Caco-2 (cell line): ENCODE measurements at regions of chr2 and their contacts with region 1.

Region 1: GRCh38 chr2:186544255-186544675 is 45.6 kb upstream of the ITGAV start:
- DNase-seq: no peak
- H3K4me3 ChIP-seq: no peak overlapping the region
- H3K4me3 Mint-ChIP-seq: peak overlapping the region; percentile 3
- H3K27ac Mint-ChIP-seq: no peak overlapping the region
- H3K4me1 ChIP-seq: peaks cover 45% of the 10 kb centered on the region
- H3K4me1 Mint-ChIP-seq: peaks cover 11% of the 10 kb centered on the region
- H3K27me3 ChIP-seq: no peaks in the 10 kb centered on the region
- H3K27me3 Mint-ChIP-seq: no peaks in the 10 kb centered on the region
- CTCF ChIP-seq: no peak

Region 2: DNA sequence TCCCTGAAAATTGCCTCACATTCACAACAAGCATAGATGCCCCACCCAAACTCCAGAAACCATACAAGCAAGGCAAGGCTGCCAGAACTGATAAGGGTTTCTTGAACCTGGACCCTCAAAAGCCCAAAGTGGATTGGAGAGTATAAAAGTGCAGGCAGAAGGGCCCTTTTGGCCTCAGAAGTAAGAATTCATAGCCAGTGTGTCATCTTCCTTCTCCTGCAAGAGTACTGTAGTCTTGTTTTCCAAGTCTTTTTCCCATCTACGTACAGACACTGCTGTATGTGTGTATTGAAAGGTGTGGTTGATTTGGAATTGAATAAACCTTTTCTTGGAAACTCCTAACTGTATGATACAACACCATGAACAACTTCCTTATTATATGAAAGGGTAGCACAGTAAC is 11.4 kb before region 1 on chr2:
- CTCF ChIA-PET with region 1: no interaction called
- POLR2A ChIA-PET with region 1: no interaction called
- intact Hi-C with region 1: loop called (anchors 1 kb)
- DNase-seq: no peak
- H3K4me3 ChIP-seq: no peak overlapping the region
- H3K4me3 Mint-ChIP-seq: no peak overlapping the region
- H3K27ac Mint-ChIP-seq: no peak overlapping the region
- H3K4me1 ChIP-seq: peaks cover 38% of the 10 kb centered on the region
- H3K4me1 Mint-ChIP-seq: peaks cover 18% of the 10 kb centered on the region
- H3K27me3 ChIP-seq: no peaks in the 10 kb centered on the region
- H3K27me3 Mint-ChIP-seq: no peaks in the 10 kb centered on the region
- CTCF ChIP-seq: no peak

Region 3: DNA sequence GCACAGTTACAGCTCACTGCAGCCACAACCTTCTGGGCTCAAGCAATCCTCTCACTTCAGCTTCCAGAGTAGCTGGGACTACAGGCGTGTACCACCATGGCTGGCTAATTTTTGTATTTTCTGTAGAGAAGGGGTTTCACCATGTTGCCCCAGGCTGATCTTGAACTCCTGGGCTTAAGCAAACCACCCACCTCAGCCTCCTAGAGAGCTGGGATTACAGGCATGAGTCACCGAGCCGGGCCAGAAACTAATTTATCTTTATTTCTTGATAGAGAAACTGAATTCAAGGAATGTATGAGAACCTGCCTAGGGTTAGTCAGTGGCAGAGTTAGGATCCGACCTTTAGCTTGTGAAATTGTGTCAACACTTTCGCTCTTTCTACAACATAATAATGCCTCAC is 26.3 kb after region 1 on chr2:
- CTCF ChIA-PET with region 1: no interaction called
- POLR2A ChIA-PET with region 1: no interaction called
- intact Hi-C with region 1: loop called (anchors 2 kb)
- DNase-seq: no peak
- H3K4me3 ChIP-seq: no peak overlapping the region
- H3K4me3 Mint-ChIP-seq: no peak overlapping the region
- H3K27ac Mint-ChIP-seq: no peak overlapping the region
- H3K4me1 ChIP-seq: peaks cover 24% of the 10 kb centered on the region; the same call in 1 of the 2 replicates
- H3K4me1 Mint-ChIP-seq: peaks cover 27% of the 10 kb centered on the region
- H3K27me3 ChIP-seq: no peaks in the 10 kb centered on the region
- H3K27me3 Mint-ChIP-seq: no peaks in the 10 kb centered on the region
- CTCF ChIP-seq: no peak